SK-N-SH (cell line): ENCODE measurements at regions of chr14 and their contacts with region 1.

Region 1: GRCh38 chr14:70816525-70816924 is 7.2 kb upstream of the MAP3K9 start:
- DNase-seq: no peak
- H3K4me3 ChIP-seq: no peak overlapping the region
- H3K27ac ChIP-seq: no peak overlapping the region
- H3K4me1 ChIP-seq: peaks cover 0 to 6% of the 10 kb centered on the region in 2 experiments; a peak in 1 of 4 replicates
- H3K27me3 ChIP-seq: no peaks in the 10 kb centered on the region
- CTCF ChIP-seq: no peak
- EP300 ChIP-seq: no peak
- RAD21 ChIP-seq: no peak

Region 2: GRCh38 chr14:70622111-70622712 is 194.3 kb before region 1 on chr14:
- CTCF ChIA-PET with region 1: interaction called, 15 read pairs
- POLR2A ChIA-PET with region 1: no interaction called
- DNase-seq: peak; percentile 56
- H3K4me3 ChIP-seq: no peak overlapping the region
- H3K27ac ChIP-seq: no peak overlapping the region
- H3K4me1 ChIP-seq: no peaks in the 10 kb centered on the region
- H3K27me3 ChIP-seq: no peaks in the 10 kb centered on the region
- CTCF ChIP-seq: peak; percentile 62
- EP300 ChIP-seq: no peak
- RAD21 ChIP-seq: peak; percentile 84

Region 3: GRCh38 chr14:70721542-70721941 is 95.0 kb before region 1 on chr14:
- CTCF ChIA-PET with region 1: interaction called, 10 read pairs
- POLR2A ChIA-PET with region 1: no interaction called
- DNase-seq: no peak
- H3K4me3 ChIP-seq: no peak overlapping the region
- H3K27ac ChIP-seq: no peak overlapping the region
- H3K4me1 ChIP-seq: peaks cover 0 to 7% of the 10 kb centered on the region in 2 experiments; a peak in 2 of 4 replicates
- H3K27me3 ChIP-seq: no peaks in the 10 kb centered on the region
- CTCF ChIP-seq: no peak
- EP300 ChIP-seq: no peak
- RAD21 ChIP-seq: no peak

Region 4: DNA sequence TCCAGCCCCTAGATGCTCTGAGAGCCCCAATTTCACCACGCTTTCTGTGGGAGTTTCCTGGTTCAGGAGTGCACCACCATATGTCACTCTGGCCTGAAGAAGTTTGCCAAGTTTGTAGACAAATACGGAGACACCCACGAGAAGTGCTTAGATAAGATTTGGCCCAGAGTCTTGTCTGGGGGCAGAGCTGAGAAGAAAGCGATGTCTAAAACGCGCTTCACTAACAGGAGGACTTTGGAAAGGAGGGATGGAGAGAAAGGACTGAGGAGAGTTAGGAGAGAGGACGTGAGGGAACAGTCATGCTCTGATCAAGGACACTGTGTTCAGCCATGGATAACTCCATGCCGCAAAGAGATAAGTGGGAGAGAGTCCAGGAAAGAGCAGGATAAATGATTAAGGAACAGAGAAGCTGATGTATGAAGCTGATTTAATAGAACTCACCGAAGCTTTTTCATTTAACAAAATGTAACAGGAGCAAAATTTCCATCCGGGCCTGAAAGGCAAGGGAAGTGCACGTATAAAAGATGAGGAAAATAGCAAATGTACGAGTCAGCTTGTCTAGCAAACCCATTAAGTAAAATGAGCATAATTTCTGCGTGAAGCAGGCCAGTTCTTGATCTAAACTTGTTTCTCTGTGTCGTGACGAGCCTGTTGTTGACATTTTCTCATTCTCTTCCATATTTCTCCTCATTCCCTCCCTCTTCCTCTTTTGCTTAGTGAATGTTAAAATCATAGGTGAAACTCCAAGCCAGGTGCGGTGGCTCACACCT is 16.2 kb after region 1 on chr14:
- CTCF ChIA-PET with region 1: interaction called, 16 read pairs
- POLR2A ChIA-PET with region 1: no interaction called
- DNase-seq: no peak
- H3K4me3 ChIP-seq: no peak overlapping the region
- H3K27ac ChIP-seq: no peak overlapping the region
- H3K4me1 ChIP-seq: no peaks in the 10 kb centered on the region
- H3K27me3 ChIP-seq: no peaks in the 10 kb centered on the region
- CTCF ChIP-seq: no peak
- EP300 ChIP-seq: no peak
- RAD21 ChIP-seq: no peak

Region 5: DNA sequence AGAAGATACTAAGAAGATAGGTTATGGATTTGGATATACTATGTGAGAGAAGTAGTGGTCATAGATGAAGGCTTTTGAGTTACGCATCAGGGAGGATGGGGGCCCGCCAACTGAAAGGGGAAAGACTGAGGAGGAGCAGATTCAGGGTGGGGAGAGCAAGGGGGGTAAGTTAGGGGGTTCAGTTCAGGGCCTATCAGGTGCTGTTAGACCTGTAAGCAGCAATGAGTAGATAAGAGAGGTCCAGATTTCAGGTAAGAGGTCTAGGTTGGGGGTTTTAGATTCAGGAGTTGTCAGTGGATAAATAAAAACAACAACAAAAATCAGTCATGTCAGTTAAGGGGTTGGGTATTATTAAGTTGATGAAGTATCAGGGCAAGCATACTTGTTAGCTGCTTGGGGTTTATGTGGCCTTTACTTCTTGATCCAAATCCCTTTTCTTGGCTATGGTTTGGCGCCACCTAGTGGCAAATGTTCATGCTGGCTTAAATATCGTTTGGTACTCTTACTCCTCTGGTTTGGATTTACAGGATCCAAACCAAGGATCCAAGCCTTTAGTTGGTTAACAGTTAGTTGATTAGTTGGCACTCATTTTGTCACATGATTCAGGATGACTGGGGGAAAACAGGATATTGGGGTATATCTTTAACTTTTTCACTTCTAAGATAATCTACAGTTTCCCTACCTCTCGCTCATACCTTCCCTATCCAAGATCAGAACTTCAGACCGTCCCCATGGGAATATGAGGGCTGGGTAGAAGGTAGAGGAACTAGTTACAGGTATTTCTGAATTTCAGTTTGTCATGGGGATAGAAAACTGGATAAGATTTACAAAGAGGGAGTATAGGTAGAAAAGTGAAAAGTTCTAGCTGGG is 155.8 kb after region 1 on chr14:
- CTCF ChIA-PET with region 1: interaction called, 32 read pairs
- POLR2A ChIA-PET with region 1: no interaction called
- DNase-seq: peak; percentile 62
- H3K4me3 ChIP-seq: no peak overlapping the region
- H3K27ac ChIP-seq: no peak overlapping the region
- H3K4me1 ChIP-seq: no peaks in the 10 kb centered on the region
- H3K27me3 ChIP-seq: no peaks in the 10 kb centered on the region
- CTCF ChIP-seq: peak; percentile 95
- EP300 ChIP-seq: no peak
- RAD21 ChIP-seq: peak; percentile 84